ENCODE measurements at regions of chr13 and their contacts with region 1.

Region 1: GRCh38 chr13:31909864-31910551 is 121.6 kb upstream of the FRY start:
- DNase-seq: peak; percentile 86
- H3K4me3 Mint-ChIP-seq: no peak overlapping the region
- H3K27ac Mint-ChIP-seq: no peak overlapping the region
- H3K4me1 Mint-ChIP-seq: peaks cover 14% of the 10 kb centered on the region
- H3K27me3 Mint-ChIP-seq: peaks cover 31% of the 10 kb centered on the region

Region 2: DNA sequence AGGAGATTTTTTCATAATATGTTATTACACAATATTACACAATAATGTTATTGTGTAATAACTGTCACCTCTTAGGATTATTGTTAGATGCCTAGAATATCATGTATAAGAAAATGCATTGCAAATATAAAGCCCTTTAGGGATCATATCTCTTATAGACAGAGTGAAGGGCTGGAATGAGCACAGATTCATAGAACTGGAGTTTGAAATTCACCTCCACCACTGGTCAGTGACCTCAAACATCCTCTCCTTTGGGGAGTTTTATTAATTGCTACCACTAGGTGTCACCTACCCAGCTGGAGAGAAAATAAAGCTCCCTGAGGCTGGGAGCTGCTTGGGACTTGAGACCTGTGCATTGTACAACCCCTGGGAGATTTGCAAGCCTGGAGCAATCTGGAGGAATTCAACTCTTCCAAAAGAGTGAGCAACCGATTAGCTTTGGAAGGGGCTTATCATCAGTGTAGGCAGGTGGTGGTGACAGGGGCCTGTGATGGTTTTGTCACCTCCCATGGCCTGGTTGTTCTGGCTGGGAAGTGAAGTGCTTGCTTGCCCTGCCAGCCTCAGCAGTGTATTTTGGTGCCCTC is 91.3 kb after region 1 on chr13:
- intact Hi-C with region 1: loop called (anchors 5 kb)
- DNase-seq: peak; percentile 70
- H3K4me3 Mint-ChIP-seq: no peak overlapping the region
- H3K27ac Mint-ChIP-seq: no peak overlapping the region
- H3K4me1 Mint-ChIP-seq: no peaks in the 10 kb centered on the region
- H3K27me3 Mint-ChIP-seq: peaks cover 8% of the 10 kb centered on the region

Region 3: GRCh38 chr13:32116210-32116609 is 206.2 kb after region 1 on chr13:
- intact Hi-C with region 1: no loop called
- DNase-seq: no peak
- H3K4me3 Mint-ChIP-seq: no peak overlapping the region
- H3K27ac Mint-ChIP-seq: no peak overlapping the region
- H3K4me1 Mint-ChIP-seq: peaks cover 8% of the 10 kb centered on the region
- H3K27me3 Mint-ChIP-seq: no peaks in the 10 kb centered on the region

Measured in activated CD4-positive, alpha-beta T cell treated with anti-CD3 and anti-CD28 coated beads, Interleukin-2, amount 10 ng/mL, durations not matched to agents 24 days and 14 days (primary cell).